ENCODE measurements at regions of chr6 and their contacts with region 1.

Region 1: GRCh38 chr6:3456755-3457466 is at the start of gene SLC22A23:
- DNase-seq: peak; percentile 86 to 99 (median 98)
- ATAC-seq: peak; percentile 80
- H3K4me3 ChIP-seq: peak within 1 kb of the TSS; percentile 50
- H3K27ac ChIP-seq: no peak within 1 kb of the TSS; the same call in 1 of the 3 replicates
- H3K4me1 ChIP-seq: peaks cover 24 to 45% of the 10 kb centered on the region in 2 experiments
- H3K27me3 ChIP-seq: 0 out of 5 replicates have a peak, but pooled peaks cover 0 to 7% of the 10 kb centered on the region in 2 experiments
- CTCF ChIP-seq: peak; percentile 57 to 83 (median 64); a peak in 5 of 6 replicates
- EP300 ChIP-seq: no peak
- POLR2A ChIP-seq: no peak
- RAD21 ChIP-seq: peak in 1 of 2 experiments; percentile 55; a peak in 3 of 4 replicates
- polyA plus RNA-seq, gene SLC22A23: 0.30 to 0.32 TPM

Region 2: DNA sequence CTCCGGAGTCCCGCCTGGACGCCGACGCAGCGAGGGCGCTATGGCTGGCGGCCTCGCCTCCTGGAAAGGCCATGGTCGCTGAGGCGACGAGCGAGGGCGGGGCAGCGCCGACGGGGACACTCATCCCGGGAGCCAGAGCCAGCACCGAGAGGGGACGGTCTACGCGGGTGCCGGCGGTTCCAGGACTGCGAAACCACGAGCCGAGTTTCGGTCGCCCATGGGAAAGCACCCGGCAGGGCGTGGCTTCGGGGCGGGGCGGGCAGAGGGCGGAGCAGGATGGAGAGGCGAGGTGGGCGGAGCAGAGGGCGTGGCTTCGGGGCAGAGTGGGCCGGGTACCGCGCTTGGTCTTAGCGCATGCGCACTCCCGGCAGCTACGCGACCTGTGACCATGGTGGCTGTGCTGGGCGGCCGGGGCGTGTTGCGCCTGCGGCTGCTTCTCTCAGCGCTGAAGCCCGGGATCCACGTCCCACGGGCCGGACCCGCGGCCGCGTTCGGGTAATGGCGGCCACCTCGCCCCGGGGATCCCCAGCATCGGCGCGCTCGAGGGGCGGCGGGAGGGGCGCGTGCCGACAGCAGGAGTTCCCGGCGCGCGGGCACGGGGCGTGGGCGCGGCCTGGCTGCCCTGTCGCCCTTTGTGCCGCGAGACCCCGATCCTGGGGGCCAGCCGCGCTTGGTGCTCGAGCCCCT is 338.4 kb before region 1 on chr6 and contains the start of gene BPHL:
- CTCF ChIA-PET with region 1: no interaction called
- POLR2A ChIA-PET with region 1: no interaction called
- in situ Hi-C with region 1: no loop called
- intact Hi-C with region 1: no loop called
- DNase-seq: peak; percentile 97 to 100 (median 100)
- ATAC-seq: peak; percentile 95
- H3K4me3 ChIP-seq: peak within 1 kb of the TSS; percentile 76
- H3K27ac ChIP-seq: peak within 1 kb of the TSS; percentile 86
- H3K4me1 ChIP-seq: peaks cover 8 to 15% of the 10 kb centered on the region in 2 experiments; a peak in 4 of 5 replicates
- H3K27me3 ChIP-seq: no peaks in the 10 kb centered on the region
- CTCF ChIP-seq: no peak
- EP300 ChIP-seq: no peak
- POLR2A ChIP-seq: peak; percentile 94
- RAD21 ChIP-seq: 0 out of 4 replicates have a peak, but pooled peaks of 1 of the 2 experiments have one; percentile 18
- polyA plus RNA-seq, gene BPHL: 3.5 to 9.3 TPM

Region 3: GRCh38 chr6:3306848-3307247 is 150.1 kb before region 1 on chr6:
- CTCF ChIA-PET with region 1: no interaction called
- POLR2A ChIA-PET with region 1: no interaction called
- in situ Hi-C with region 1: no loop called
- intact Hi-C with region 1: no loop called
- DNase-seq: no peak
- ATAC-seq: no peak
- H3K4me3 ChIP-seq: no peak overlapping the region
- H3K27ac ChIP-seq: no peak overlapping the region
- H3K4me1 ChIP-seq: peaks cover 0 to 4% of the 10 kb centered on the region in 2 experiments; a peak in 2 of 5 replicates
- H3K27me3 ChIP-seq: no peaks in the 10 kb centered on the region
- CTCF ChIP-seq: no peak
- EP300 ChIP-seq: no peak
- POLR2A ChIP-seq: no peak
- RAD21 ChIP-seq: no peak

Region 4: GRCh38 chr6:3471711-3472110 is 14.8 kb after region 1 on chr6:
- CTCF ChIA-PET with region 1: no interaction called
- POLR2A ChIA-PET with region 1: interaction called, 21 read pairs
- in situ Hi-C with region 1: no loop called
- intact Hi-C with region 1: no loop called
- DNase-seq: no peak
- ATAC-seq: no peak
- H3K4me3 ChIP-seq: no peak overlapping the region
- H3K27ac ChIP-seq: no peak overlapping the region
- H3K4me1 ChIP-seq: peaks cover 3 to 11% of the 10 kb centered on the region in 2 experiments; a peak in 3 of 5 replicates
- H3K27me3 ChIP-seq: peaks cover 2 to 4% of the 10 kb centered on the region in 2 experiments; a peak in 3 of 5 replicates
- CTCF ChIP-seq: no peak
- EP300 ChIP-seq: no peak
- POLR2A ChIP-seq: no peak
- RAD21 ChIP-seq: no peak